Common myeloid progenitor, CD34-positive (primary cell): ENCODE measurements at regions of chr1 and their contacts with region 1.

Region 1: DNA sequence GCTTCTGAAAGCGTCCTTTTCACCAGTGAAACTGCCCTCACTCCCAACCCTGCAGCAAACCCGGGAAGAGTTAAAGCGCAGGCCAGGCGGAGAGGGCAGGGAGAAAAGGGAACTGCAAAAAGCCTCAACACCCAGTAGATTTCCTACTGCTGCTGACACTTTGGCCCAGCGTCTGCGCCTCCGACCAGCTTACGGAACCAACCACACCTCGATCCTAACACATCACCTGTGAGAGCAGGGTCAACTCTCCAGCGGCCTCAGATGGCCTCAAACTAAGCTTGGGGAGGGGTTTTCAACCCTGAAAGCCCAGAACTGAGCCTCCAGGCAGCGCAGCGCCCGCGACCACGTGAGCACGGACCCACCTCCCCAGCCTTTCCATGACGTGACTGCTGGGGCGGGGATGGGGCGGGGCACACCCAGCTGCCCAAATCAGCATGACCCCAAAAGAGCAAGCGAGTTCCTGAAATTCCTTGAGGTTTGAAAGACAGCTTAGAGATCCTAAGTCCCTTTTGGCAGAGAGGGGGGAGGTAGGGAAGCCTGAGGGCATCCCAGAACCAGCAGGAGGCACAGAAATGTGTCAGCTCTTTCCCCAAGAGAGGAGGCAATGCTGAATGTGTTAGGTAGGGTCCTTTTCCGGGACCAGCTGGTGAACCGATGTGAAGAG is 59.1 kb downstream of the ITPKB start:
- DNase-seq: peak; percentile 64 to 77 (median 64)
- H3K4me3 ChIP-seq: peak overlapping the region; percentile 36 to 83 (median 66)
- H3K27ac ChIP-seq: peak overlapping the region; percentile 71 to 85
- H3K4me1 ChIP-seq: peaks cover 42 to 65% (median 56%) of the 10 kb centered on the region in 4 experiments
- H3K27me3 ChIP-seq: no peaks in the 10 kb centered on the region

Region 2: GRCh38 chr1:226662642-226663326 is 17.2 kb before region 1 on chr1:
- CTCF ChIA-PET with region 1: interaction called, 27 read pairs
- POLR2A ChIA-PET with region 1: interaction called, 4 read pairs
- DNase-seq: peak; percentile 70 to 92 (median 89)
- H3K4me3 ChIP-seq: no peak overlapping the region
- H3K27ac ChIP-seq: peak overlapping the region in 1 of 2 experiments; percentile 54
- H3K4me1 ChIP-seq: peaks cover 29 to 85% (median 70%) of the 10 kb centered on the region in 4 experiments
- H3K27me3 ChIP-seq: no peaks in the 10 kb centered on the region